ENCODE measurements at regions of chr16 and their contacts with region 1.

Region 1: GRCh38 chr16:20865420-20866131 is 34.6 kb downstream of the DCUN1D3 start:
- DNase-seq: no peak
- H3K4me3 Mint-ChIP-seq: no peak overlapping the region
- H3K27ac Mint-ChIP-seq: peak overlapping the region; percentile 66
- H3K4me1 Mint-ChIP-seq: peaks cover 26% of the 10 kb centered on the region
- H3K27me3 Mint-ChIP-seq: no peaks in the 10 kb centered on the region

Region 2: DNA sequence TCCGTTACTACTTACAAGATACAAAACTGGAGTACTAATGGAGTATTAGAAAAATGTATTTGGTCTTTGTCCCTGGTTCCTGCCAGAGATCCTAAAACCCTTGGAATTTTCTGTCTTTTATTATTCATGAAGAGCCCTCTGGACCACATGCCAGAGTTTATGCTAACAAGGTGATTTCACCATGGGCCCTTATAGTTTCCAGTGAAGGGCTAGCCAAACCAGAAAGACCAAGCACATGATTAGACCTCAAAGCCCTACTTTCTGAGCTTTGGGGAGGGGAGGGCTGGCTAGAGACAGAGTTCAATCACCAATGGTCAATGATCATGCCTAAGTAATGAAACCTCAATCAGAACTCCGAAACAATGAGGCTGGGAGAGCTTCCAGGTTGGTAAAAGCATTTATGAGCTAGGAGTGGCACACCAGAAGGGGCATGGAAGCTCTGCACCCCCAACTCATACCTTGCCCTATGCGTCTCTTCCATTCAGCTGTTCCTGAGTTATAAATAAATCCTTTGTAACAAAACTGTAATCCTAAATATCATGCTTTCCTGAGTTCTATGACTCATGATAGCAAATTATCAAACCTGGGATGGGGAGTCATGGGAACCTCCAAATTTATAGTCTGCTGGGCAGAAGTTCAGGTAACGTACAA is 24.2 kb after region 1 on chr16:
- CTCF ChIA-PET with region 1: no interaction called
- POLR2A ChIA-PET with region 1: no interaction called
- intact Hi-C with region 1: loop called (anchors 1 kb)
- DNase-seq: no peak
- H3K4me3 Mint-ChIP-seq: no peak overlapping the region
- H3K27ac Mint-ChIP-seq: no peak overlapping the region
- H3K4me1 Mint-ChIP-seq: peaks cover 18% of the 10 kb centered on the region
- H3K27me3 Mint-ChIP-seq: no peaks in the 10 kb centered on the region